Mammary epithelial cell (primary cell): ENCODE measurements at regions of chr7 and their contacts with region 1.

Region 1: DNA sequence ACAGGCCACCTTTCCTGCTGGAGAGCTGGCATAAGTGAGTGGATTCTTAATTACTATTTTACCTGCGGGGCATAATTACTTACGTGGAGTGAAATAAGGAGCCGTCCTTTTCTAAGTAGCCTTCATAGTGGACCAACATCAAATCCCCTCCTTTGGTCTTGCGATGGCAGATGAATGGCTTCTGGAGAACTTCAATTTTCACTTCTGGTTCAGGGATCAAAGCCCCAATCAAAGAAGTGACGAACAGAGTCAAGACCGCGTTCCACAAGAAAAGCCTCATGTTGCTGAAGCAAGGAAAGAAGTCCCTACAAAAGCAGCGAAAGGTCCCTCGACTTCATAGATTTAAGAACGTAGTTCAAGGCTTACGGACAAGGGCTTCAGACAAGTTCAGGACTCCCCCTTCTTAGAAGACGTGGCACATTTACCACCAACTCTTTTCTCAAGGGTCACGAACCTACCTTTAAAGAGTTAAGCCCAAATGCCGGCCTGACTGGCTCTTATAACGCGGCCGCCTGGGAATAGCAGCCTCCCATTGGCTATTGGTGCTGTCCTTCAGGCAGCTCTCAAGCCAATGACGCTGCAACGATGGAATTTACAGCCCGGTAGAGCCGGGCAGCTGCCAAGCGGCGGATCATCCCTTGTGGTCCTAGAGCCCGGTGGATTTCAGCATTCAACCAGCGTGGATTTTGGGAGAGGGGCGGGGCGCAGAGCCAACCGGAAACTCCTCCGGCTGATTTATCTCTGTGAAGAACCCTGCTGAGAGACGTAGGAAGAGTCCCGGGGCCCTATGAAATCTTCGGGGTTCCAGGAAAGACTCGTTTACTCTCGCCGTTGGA is at the start of gene FKBP14:
- DNase-seq: peak; percentile 99
- H3K4me3 ChIP-seq: peak within 1 kb of the TSS; percentile 79 to 84 (median 83)
- H3K27ac ChIP-seq: peak within 1 kb of the TSS; percentile 81
- H3K4me1 ChIP-seq: peaks cover 18% of the 10 kb centered on the region
- H3K27me3 ChIP-seq: no peaks in the 10 kb centered on the region
- CTCF ChIP-seq: no peak
- total RNA-seq, gene FKBP14: 29.7 to 37.4 TPM

Region 2: GRCh38 chr7:29622335-29623265 is 403.8 kb before region 1 on chr7:
- CTCF ChIA-PET with region 1: no interaction called
- dilution Hi-C with region 1: no loop called
- in situ Hi-C with region 1: no loop called
- intact Hi-C with region 1: loop called (anchors 2 kb)
- DNase-seq: peak; percentile 94
- H3K4me3 ChIP-seq: no peak overlapping the region
- H3K27ac ChIP-seq: peak overlapping the region; percentile 42
- H3K4me1 ChIP-seq: peaks cover 34% of the 10 kb centered on the region
- H3K27me3 ChIP-seq: no peaks in the 10 kb centered on the region
- CTCF ChIP-seq: no peak

Region 3: GRCh38 chr7:29988424-29989256 is 37.8 kb before region 1 on chr7:
- CTCF ChIA-PET with region 1: no interaction called
- dilution Hi-C with region 1: no loop called
- in situ Hi-C with region 1: no loop called
- intact Hi-C with region 1: loop called (anchors 1 kb)
- DNase-seq: peak; percentile 63
- H3K4me3 ChIP-seq: peak overlapping the region; percentile 87 to 99 (median 97)
- H3K27ac ChIP-seq: peak overlapping the region; percentile 57
- H3K4me1 ChIP-seq: peaks cover 21% of the 10 kb centered on the region
- H3K27me3 ChIP-seq: no peaks in the 10 kb centered on the region
- CTCF ChIP-seq: no peak

Region 4: GRCh38 chr7:30062591-30062990 is 36.1 kb after region 1 on chr7:
- CTCF ChIA-PET with region 1: interaction called, 4 read pairs
- dilution Hi-C with region 1: loop called (anchors 5 kb)
- in situ Hi-C with region 1: no loop called
- intact Hi-C with region 1: loop called (anchors 2 kb)
- DNase-seq: peak; percentile 5
- H3K4me3 ChIP-seq: no peak overlapping the region
- H3K27ac ChIP-seq: no peak overlapping the region
- H3K4me1 ChIP-seq: no peaks in the 10 kb centered on the region
- H3K27me3 ChIP-seq: no peaks in the 10 kb centered on the region
- CTCF ChIP-seq: peak; percentile 50 to 53

Region 5: DNA sequence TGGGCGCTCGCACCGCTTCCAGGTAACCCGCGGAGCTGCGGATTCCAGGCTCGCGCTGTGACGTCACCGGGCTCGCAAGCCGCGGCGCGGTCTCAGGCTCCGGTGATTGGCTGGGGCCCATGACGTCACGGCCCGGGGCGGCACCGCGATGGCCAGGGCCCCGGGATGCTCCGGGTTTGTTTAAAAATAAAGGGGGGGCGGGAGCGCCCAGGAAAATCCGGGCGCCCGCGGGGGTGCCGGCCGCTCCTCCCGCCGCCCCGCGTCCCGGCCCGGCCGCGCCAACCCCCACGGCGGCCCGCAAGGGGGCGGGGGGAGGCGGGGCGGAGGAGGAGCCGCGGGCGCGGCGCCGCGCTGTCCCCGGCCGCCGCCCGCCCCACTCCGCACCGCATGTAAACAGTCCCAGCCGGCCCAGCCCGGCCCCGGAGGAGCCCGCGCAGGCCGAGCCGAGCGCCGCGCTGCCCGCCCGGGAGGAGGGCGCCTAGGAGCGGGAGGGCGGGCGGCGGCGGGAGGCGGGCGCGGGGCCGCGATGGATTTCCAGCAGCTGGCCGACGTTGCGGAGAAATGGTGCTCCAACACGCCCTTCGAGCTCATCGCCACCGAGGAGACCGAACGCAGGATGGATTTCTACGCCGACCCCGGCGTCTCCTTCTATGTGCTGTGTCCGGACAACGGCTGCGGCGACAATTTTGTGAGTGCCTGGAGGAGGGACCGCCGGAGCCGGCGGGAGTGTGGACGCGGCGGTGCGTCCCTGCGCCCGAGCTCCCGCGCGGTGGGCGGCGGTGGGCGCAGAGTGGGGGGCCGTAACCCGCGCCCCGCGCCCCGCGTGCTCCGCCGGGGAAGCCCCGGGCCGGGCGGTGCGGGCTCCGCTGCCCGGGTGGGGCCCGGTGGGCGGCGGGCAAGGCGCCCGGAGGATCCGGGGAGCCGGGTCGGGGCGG is 108.4 kb after region 1 on chr7 and contains the start of gene MTURN:
- CTCF ChIA-PET with region 1: no interaction called
- dilution Hi-C with region 1: no loop called
- in situ Hi-C with region 1: no loop called
- intact Hi-C with region 1: loop called (anchors 5 kb)
- DNase-seq: peak; percentile 76
- H3K4me3 ChIP-seq: peak within 1 kb of the TSS; percentile 57 to 74 (median 73)
- H3K27ac ChIP-seq: peak within 1 kb of the TSS; percentile 66
- H3K4me1 ChIP-seq: peaks cover 14% of the 10 kb centered on the region
- H3K27me3 ChIP-seq: no peaks in the 10 kb centered on the region
- CTCF ChIP-seq: no peak
- total RNA-seq, gene MTURN: 9.7 to 15.5 TPM

Region 6: DNA sequence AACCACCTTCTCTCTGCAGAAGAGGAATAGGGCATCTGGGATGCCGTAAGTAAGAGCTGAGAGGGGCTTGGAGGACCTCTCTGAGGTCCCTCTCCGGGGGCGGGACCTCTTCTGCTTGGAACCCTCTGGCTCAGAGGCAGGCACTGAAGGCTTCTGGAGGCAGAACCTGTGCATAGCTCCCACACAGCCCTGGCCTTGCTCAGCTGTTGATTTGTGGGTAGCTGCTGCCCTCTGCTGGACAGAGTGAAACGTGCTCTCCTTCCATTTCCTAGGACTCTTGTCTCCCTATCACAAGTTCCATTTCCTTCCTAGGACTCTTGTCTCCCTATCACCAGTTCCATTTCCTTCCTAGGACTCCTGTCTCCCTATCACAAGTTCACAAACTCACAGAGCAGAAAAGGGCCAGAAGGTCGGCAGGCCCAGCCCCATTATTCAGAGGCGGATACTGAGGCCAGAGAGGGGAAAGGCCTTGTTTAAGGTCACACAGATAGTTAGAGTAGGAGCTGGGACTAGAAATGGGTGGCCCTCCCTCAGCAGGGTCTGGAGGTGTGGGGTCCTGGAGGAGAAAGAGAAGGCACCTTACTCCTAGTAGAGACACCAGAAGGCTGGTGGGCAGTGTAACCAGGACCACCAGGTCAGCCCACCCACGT is 537.9 kb after region 1 on chr7:
- CTCF ChIA-PET with region 1: no interaction called
- dilution Hi-C with region 1: no loop called
- in situ Hi-C with region 1: no loop called
- intact Hi-C with region 1: loop called (anchors 10 kb)
- DNase-seq: peak; percentile 78
- H3K4me3 ChIP-seq: no peak overlapping the region
- H3K27ac ChIP-seq: peak overlapping the region; percentile 77
- H3K4me1 ChIP-seq: peaks cover 24% of the 10 kb centered on the region
- H3K27me3 ChIP-seq: no peaks in the 10 kb centered on the region
- CTCF ChIP-seq: peak; percentile 81 to 91